Activated naive CD4-positive, alpha-beta T cell treated with anti-CD3 and anti-CD28 coated beads for 36 hours (primary cell): ENCODE measurements at regions of chr2 and their contacts with region 1.

Region 1: GRCh38 chr2:187453078-187453641 is 5.1 kb upstream of the CALCRL start:
- DNase-seq: no peak
- H3K4me3 Mint-ChIP-seq: no peak overlapping the region
- H3K27ac Mint-ChIP-seq: no peak overlapping the region
- H3K4me1 Mint-ChIP-seq: peaks cover 3% of the 10 kb centered on the region
- H3K27me3 Mint-ChIP-seq: no peaks in the 10 kb centered on the region

Region 2: DNA sequence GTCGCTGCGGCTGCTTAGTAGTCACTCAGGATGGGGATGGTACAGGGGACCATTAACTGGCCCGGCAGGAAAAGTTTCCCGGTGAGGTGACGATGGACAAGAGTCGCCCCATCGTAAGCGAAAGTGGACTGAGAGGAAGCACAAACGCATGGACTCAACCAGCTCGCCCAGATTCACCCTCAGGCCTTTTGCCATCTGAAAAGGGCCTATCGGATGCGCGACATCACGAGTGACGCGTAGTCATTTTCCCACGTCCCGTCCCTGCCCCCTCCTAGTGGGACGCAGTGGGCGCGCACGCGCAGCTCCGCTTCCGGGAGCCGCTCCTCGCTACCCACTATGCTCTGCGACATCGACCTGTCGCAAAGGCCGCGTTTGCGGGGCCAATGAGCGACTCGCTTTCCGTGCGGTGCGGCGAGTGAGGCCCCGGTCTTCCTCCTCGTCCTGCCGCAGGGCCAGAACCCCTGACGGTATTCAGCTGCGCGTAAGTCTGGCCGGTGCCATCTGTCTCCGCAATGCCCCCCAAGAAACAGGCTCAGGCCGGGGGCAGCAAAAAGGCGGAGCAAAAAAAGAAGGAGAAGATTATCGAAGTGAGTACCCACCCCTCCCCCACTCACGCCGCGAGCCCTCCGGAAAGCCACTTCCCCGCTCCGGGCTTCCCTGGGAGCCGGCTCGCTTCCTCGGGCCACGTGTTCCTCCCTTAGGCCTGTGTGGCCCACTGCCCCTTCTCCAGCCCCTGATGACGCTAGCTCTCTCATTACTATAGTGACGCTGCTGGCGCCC is 967.1 kb before region 1 on chr2 and contains the start of gene ZC3H15:
- CTCF ChIA-PET with region 1: no interaction called
- intact Hi-C with region 1: loop called (anchors 1 kb)
- DNase-seq: peak; percentile 96
- H3K4me3 Mint-ChIP-seq: peak within 1 kb of the TSS; percentile 98
- H3K27ac Mint-ChIP-seq: peak within 1 kb of the TSS; percentile 98
- H3K4me1 Mint-ChIP-seq: peaks cover 60% of the 10 kb centered on the region
- H3K27me3 Mint-ChIP-seq: no peaks in the 10 kb centered on the region
- total RNA-seq, gene ZC3H15: 92.2 to 93.3 TPM

Region 3: DNA sequence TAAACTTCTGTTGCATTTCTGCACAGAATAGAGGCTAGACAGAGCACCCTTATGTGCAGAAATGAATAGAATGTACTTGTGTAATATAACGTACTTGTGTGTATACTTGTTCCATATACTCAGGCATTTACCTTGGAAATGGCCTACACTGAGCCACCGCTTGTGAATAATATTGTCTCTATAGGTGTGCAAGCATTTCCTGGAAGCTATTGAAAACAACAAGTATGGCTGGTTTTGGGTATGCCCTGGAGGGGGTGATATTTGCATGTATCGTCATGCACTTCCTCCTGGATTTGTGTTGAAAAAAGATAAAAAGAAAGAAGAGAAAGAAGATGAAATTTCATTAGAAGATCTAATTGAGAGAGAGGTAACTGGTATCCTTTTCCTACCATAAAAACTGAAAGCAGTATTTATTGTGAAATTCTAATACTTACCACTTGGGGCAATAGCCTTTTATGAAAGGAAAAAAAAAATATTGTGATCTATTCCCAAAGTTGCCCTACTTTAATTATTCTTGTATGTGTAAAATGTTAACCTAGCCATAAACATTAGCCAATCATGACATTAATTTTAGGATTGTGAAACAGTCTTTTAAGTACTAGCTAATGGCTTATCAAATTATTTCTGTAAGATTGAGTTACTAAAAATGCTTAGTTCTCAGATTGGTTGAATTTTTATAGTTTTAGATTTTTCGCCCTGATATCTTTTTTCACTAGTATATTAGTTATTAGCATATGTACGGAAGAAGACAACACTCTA is 949.1 kb before region 1 on chr2:
- CTCF ChIA-PET with region 1: no interaction called
- intact Hi-C with region 1: loop called (anchors 1 kb)
- DNase-seq: no peak
- H3K4me3 Mint-ChIP-seq: no peak overlapping the region
- H3K27ac Mint-ChIP-seq: peak overlapping the region; percentile 46
- H3K4me1 Mint-ChIP-seq: peaks cover 9% of the 10 kb centered on the region
- H3K27me3 Mint-ChIP-seq: no peaks in the 10 kb centered on the region

Region 4: DNA sequence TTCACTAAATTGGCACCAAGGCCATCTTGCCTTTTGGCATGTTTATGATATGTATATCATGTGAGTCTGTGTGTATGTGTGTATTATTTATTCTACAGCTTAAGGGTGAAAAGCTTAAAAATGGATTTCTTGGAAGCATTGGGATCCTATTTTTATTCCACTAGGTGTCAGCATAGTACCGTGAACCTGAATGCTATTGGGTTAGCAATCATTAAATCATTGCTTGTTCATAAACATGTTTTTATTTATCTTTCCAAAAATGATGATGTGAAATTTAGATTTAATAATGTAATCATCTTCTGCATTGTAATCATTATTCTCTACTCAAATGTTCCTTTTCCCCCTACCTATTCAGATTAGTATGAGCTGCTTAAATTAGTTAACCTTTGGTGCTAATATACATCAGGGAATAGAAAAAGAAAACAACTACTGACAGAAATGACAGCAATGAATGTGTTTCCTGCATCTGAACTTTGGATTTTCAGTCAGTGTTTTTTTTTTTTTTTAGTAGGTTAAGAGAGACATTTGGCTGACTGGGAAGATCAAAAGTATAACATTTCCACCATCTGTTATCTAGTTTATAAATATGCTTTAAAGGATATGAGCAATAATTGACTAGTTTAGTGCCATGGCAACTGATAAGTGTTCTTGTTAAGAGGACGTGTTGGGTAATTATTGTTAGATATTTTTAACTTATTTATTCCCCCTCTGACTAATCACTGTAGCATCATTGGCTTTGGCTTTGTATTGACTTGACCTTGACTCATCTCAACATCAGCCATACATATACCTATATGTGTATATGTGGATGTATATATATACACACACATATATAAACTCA is 590.1 kb before region 1 on chr2:
- CTCF ChIA-PET with region 1: interaction called, 3 read pairs
- intact Hi-C with region 1: loop called (anchors 2 kb)
- DNase-seq: no peak
- H3K4me3 Mint-ChIP-seq: no peak overlapping the region
- H3K27ac Mint-ChIP-seq: no peak overlapping the region
- H3K4me1 Mint-ChIP-seq: no peaks in the 10 kb centered on the region
- H3K27me3 Mint-ChIP-seq: peaks cover 2% of the 10 kb centered on the region

Region 5: GRCh38 chr2:186903216-186903615 is 549.9 kb before region 1 on chr2:
- CTCF ChIA-PET with region 1: no interaction called
- intact Hi-C with region 1: loop called (anchors 1 kb)
- DNase-seq: no peak
- H3K4me3 Mint-ChIP-seq: no peak overlapping the region
- H3K27ac Mint-ChIP-seq: no peak overlapping the region
- H3K4me1 Mint-ChIP-seq: no peaks in the 10 kb centered on the region
- H3K27me3 Mint-ChIP-seq: peaks cover 4% of the 10 kb centered on the region

Region 6: DNA sequence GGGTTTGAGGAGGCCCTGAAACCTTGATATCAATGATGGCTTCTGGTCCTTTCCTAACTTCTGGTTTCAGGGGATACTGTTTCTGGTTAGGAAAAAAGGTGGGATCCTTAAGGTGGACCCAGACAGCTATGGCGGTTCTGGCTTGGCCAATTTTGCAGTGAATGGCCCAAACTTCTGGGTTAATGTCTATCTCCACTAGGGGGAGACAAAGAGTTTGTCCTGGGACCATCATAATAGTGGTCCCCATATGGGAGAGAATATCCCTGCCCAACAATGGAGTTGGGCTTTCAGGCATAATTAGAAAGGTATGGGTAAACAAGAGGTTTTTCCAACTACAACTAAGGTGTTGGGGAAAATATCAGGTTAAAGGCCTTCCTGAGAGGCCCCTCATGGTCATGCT is 278.6 kb before region 1 on chr2:
- CTCF ChIA-PET with region 1: no interaction called
- intact Hi-C with region 1: loop called (anchors 1 kb)
- DNase-seq: no peak
- H3K4me3 Mint-ChIP-seq: no peak overlapping the region
- H3K27ac Mint-ChIP-seq: no peak overlapping the region
- H3K4me1 Mint-ChIP-seq: no peaks in the 10 kb centered on the region
- H3K27me3 Mint-ChIP-seq: no peaks in the 10 kb centered on the region

Region 7: DNA sequence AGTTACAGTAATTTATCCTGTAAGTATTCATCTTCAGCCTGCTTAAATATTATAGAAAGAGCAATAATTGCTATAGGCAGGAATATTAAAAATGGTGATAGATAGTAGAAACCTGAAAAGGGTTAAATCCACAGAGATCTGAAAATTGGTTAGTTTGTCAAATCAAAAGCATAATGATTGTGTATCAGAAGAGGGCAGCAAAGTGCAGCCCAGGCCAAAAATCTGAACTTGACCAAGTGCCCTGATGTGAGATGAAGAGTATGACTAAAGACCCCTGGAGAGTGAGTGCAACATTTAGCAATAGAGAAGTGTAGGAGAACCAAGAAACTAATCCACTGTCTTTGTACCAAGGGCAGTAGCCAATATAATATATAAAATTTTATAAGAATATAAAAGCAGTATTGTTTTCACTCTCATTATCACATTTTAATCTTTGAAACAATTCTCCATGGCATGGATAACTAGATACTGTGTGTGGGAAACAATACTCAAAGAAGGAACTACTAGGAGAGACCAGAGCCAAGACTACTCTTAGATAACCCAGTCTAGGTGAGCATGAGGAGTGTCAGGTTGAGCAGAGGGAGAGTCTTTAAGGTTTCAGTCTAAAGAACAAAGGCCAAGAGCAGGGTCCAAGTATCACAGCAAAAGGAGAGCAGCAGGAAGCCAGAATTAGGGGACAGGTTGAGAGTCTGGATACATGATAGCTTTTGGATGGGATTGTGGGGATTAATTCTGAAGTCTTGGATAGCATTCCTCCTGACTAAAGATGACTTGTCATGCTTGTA is 153.8 kb before region 1 on chr2:
- CTCF ChIA-PET with region 1: no interaction called
- intact Hi-C with region 1: loop called (anchors 1 kb)
- DNase-seq: no peak
- H3K4me3 Mint-ChIP-seq: no peak overlapping the region
- H3K27ac Mint-ChIP-seq: no peak overlapping the region
- H3K4me1 Mint-ChIP-seq: no peaks in the 10 kb centered on the region
- H3K27me3 Mint-ChIP-seq: no peaks in the 10 kb centered on the region